ENCODE measurements at regions of chr19 and their contacts with region 1.

Region 1: GRCh38 chr19:49858031-49858991 is 7.4 kb downstream of the PTOV1 start:
- DNase-seq: peak; percentile 75 to 85
- H3K4me3 ChIP-seq: no peak overlapping the region
- H3K27ac ChIP-seq: no peak overlapping the region
- H3K4me1 ChIP-seq: peaks cover 5% of the 10 kb centered on the region in 2 donors
- H3K27me3 ChIP-seq: no peaks in the 10 kb centered on the region
- CTCF ChIP-seq: no peak
- POLR2A ChIP-seq: no peak

Region 2: GRCh38 chr19:49808711-49809159 is 49.6 kb before region 1 on chr19:
- intact Hi-C with region 1: loop called (anchors 5 kb)
- DNase-seq: peak; percentile 95
- H3K4me3 ChIP-seq: peak overlapping the region; percentile 1 to 70 (median 32)
- H3K27ac ChIP-seq: peak overlapping the region in 2 of 3 donors; percentile 71 to 72
- H3K4me1 ChIP-seq: peaks cover 14 to 22% of the 10 kb centered on the region in 2 donors
- H3K27me3 ChIP-seq: no peaks in the 10 kb centered on the region
- CTCF ChIP-seq: no peak
- POLR2A ChIP-seq: peak in 1 of 2 donors; percentile 48

Region 3: GRCh38 chr19:49957262-49957915 is 99.1 kb after region 1 on chr19:
- intact Hi-C with region 1: no loop called
- DNase-seq: peak; percentile 41 to 42
- H3K4me3 ChIP-seq: no peak overlapping the region
- H3K27ac ChIP-seq: peak overlapping the region in 2 of 3 donors; percentile 38 to 79
- H3K4me1 ChIP-seq: peaks cover 44 to 56% of the 10 kb centered on the region in 2 donors
- H3K27me3 ChIP-seq: no peaks in the 10 kb centered on the region
- CTCF ChIP-seq: no peak
- POLR2A ChIP-seq: no peak

Measured in thyroid gland (tissue), 4 donors.